ENCODE measurements at regions of chr11 and their contacts with region 1.

Region 1: DNA sequence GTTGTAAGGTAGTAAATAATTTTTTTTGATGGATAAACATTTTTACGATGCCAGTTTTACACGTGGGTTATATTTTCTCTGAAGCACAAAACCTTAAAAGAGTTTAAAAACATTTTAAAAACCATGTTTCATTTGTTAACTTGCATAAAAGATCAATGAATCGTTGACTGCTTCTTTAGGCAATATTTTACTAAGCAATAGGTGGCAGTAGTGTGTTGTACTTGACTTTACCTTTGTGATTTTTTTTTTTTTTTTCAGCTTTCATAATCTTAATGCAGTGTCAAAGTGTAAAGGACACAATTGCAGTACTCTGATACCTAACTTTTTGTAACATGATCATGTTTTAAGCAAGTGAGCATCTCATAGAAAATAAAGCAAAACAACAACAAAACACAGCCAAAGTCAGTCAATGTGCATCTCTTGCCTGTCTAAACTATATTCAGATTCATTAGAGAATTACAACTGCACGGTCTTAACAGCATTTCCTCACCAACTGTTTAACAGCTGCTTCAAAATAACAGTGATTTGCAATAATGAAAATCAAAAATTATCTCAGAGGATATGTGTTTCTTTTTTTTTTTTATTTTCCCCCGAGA is 27.7 kb downstream of the DNAJC24 start:
- DNase-seq: peak; percentile 56
- ATAC-seq: no peak
- H3K4me3 ChIP-seq: no peak overlapping the region
- H3K27ac ChIP-seq: no peak overlapping the region
- H3K4me1 ChIP-seq: no peaks in the 10 kb centered on the region
- H3K27me3 ChIP-seq: no peaks in the 10 kb centered on the region
- CTCF ChIP-seq: peak; percentile 75

Region 2: DNA sequence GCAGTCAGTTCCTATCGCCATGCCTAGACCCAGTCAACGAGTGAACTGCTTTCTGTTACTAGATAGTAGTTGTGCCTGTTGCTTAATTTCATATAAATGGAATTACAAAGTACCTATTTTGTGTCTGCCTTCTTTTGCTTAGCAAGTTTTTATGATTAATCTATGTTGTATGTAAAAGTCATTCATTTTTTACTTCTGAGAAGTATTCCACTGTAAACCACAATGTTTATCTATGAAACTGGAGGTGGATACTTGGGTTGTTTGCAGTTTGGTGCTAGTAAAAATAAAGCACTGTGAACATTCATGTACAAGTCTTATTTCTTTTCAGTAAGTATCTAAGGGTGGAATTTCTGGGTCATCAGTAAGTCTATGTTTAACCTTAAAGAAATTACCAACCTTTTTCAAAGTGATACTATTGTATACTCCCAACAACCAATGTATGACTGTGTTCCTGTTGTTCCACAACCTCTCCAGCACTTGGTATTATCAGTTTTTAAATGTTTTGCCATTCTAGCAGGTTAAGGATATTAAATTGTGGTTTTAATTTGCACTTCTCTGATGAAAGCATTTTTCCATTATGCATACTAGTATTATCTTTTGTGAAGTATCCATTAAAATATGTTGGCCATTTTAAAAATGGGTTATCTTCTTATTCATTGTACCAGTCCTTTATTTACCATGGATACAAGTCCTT is 40.6 kb after region 1 on chr11:
- CTCF ChIA-PET with region 1: no interaction called
- POLR2A ChIA-PET with region 1: no interaction called
- intact Hi-C with region 1: loop called (anchors 5 kb)
- DNase-seq: peak; percentile 71
- ATAC-seq: peak; percentile 81
- H3K4me3 ChIP-seq: no peak overlapping the region
- H3K27ac ChIP-seq: peak overlapping the region; percentile 75
- H3K4me1 ChIP-seq: peaks cover 34% of the 10 kb centered on the region
- H3K27me3 ChIP-seq: no peaks in the 10 kb centered on the region
- CTCF ChIP-seq: no peak

Region 3: DNA sequence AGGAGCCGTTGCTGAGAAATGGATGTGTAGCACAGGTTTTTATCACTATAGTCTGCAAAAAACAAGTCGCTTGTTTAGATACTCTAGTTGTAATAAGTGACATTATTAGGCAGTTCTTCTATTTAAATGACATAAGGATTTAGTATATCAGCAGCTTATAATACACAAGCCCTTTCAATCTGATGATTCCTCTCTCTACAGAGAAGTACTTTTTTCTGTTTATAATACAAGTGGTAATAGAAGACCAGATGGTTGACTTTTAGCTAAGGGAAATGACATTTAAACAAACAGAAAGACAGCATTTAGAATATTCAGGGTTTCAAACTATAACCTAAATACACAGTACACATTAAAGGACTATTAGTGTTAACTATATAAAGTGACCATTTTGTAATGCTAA is 51.7 kb after region 1 on chr11:
- CTCF ChIA-PET with region 1: no interaction called
- POLR2A ChIA-PET with region 1: no interaction called
- intact Hi-C with region 1: no loop called
- DNase-seq: no peak
- ATAC-seq: no peak
- H3K4me3 ChIP-seq: no peak overlapping the region
- H3K27ac ChIP-seq: no peak overlapping the region
- H3K4me1 ChIP-seq: no peaks in the 10 kb centered on the region
- H3K27me3 ChIP-seq: no peaks in the 10 kb centered on the region
- CTCF ChIP-seq: no peak

Region 4: DNA sequence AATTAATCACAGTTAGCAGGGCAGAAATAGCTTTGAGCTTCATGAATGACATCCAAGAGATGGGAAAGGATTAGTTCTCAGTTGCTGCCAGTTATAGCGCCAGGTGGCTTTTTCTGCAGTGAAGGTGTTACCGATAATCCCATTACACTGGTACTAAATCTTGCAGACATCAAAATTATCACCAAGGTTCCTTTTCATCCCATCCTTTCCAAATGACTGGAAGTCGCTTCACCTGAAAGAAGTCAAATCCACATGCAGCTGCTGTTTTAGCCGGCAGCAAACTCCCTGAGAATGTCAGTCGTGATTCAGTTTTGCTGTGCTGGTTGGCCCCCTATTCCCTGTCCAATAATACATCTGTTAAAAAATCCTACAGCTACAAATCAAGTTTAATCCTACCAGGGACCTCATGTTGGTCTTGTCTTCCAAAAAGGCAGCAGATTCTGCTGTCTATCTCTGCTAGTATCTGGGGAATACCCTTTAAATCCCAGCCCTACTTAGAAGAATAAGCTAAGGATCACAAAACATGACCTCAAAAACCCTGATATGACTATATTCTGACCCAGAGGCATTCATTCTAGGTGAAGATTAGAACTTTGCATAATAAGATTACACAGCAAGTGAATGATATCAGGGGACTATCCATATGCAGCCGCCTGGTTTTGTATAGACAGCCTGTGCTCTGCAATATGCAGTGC is 80.3 kb after region 1 on chr11:
- CTCF ChIA-PET with region 1: no interaction called
- POLR2A ChIA-PET with region 1: no interaction called
- intact Hi-C with region 1: no loop called
- DNase-seq: no peak
- ATAC-seq: no peak
- H3K4me3 ChIP-seq: no peak overlapping the region
- H3K27ac ChIP-seq: no peak overlapping the region
- H3K4me1 ChIP-seq: no peaks in the 10 kb centered on the region
- H3K27me3 ChIP-seq: no peaks in the 10 kb centered on the region
- CTCF ChIP-seq: no peak

Region 5: DNA sequence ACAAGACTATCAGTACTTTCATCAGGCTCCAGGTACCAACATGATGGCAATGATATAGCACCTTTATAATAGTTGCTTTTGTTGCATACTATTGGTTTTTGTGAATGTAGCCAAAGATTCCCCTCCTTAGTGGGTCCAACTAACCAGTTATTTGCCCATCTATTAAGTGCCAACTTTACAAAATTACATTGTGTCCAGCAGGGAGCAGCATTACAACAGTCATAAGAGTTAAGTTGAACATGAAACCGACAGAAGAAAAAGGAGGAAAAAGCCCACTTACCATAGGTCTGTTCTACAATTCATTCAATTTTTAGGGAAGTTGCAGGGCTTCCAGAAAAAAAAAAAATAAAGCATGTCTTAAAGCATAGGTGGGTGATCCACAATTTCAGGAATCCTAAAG is 90.5 kb after region 1 on chr11:
- CTCF ChIA-PET with region 1: no interaction called
- POLR2A ChIA-PET with region 1: no interaction called
- intact Hi-C with region 1: loop called (anchors 5 kb)
- DNase-seq: peak; percentile 70
- ATAC-seq: peak; percentile 59
- H3K4me3 ChIP-seq: no peak overlapping the region
- H3K27ac ChIP-seq: no peak overlapping the region
- H3K4me1 ChIP-seq: no peaks in the 10 kb centered on the region
- H3K27me3 ChIP-seq: no peaks in the 10 kb centered on the region
- CTCF ChIP-seq: peak; percentile 72

Region 6: GRCh38 chr11:31958076-31958735 is 560.9 kb after region 1 on chr11:
- CTCF ChIA-PET with region 1: no interaction called
- POLR2A ChIA-PET with region 1: no interaction called
- intact Hi-C with region 1: loop called (anchors 5 kb)
- DNase-seq: peak; percentile 77
- ATAC-seq: peak; percentile 61
- H3K4me3 ChIP-seq: no peak overlapping the region
- H3K27ac ChIP-seq: no peak overlapping the region
- H3K4me1 ChIP-seq: peaks cover 16% of the 10 kb centered on the region
- H3K27me3 ChIP-seq: no peaks in the 10 kb centered on the region
- CTCF ChIP-seq: peak; percentile 88

Region 7: GRCh38 chr11:32006799-32007388 is 609.6 kb after region 1 on chr11:
- CTCF ChIA-PET with region 1: no interaction called
- POLR2A ChIA-PET with region 1: no interaction called
- intact Hi-C with region 1: loop called (anchors 5 kb)
- DNase-seq: peak; percentile 71
- ATAC-seq: peak; percentile 55
- H3K4me3 ChIP-seq: no peak overlapping the region
- H3K27ac ChIP-seq: no peak overlapping the region
- H3K4me1 ChIP-seq: peaks cover 15% of the 10 kb centered on the region
- H3K27me3 ChIP-seq: peaks cover 40% of the 10 kb centered on the region
- CTCF ChIP-seq: peak; percentile 79

Measured in PC-3 (cell line).